Right ventricle myocardium superior (tissue), 1 donor: ENCODE measurements at regions of chrX and their contacts with region 1.

Region 1: GRCh38 chrX:19990556-19991349 is at the start of gene BCLAF3:
- DNase-seq: peak; percentile 93
- ATAC-seq: peak; percentile 99
- total RNA-seq, gene BCLAF3: 6.5 TPM

Region 2: DNA sequence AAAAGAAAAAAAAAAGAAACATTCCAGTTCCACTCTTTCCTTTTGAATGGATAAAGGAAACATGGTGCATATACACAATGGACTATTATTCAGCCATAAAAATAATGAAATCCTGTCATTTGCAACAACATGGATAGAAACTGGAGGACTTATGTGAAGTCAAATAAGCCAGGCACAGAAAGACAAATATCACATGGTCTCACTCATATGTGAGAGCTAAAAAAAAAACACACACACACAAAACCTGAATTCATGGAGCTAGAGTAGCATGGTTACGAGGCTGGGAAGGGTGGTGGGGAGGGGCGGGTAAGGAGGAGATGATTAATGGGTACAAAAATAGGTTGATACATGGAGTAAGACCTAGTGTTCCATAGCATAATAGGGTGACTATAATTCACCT is 81.0 kb before region 1 on chrX:
- intact Hi-C with region 1: loop called (anchors 10 kb)
- DNase-seq: no peak
- ATAC-seq: no peak